B cell (primary cell): ENCODE measurements at regions of chr3 and their contacts with region 1.

Region 1: DNA sequence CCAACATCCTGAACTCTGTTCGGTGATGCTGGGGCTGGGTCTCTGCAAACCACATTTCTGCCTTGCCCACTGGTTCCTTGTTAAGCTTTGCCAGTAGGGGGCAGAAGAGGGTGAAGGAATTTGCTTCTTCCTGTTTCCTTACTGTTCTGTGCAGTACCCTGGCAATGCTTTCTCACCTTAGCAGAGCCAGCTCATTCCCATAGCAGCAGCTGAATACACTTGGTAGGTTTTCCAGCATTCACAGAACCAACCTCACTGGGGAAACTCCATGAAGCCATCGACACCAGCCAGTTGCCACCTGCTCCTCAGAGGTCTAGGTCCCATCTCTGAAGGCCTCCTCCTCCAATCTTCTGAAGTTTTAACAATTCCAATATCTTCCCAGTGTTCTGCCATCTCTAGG is 308.4 kb downstream of the PDCD6IP start:
- DNase-seq: peak; percentile 49
- ATAC-seq: peak; percentile 39
- H3K4me3 ChIP-seq: no peak overlapping the region
- H3K4me3 Mint-ChIP-seq: no peak overlapping the region
- H3K27ac ChIP-seq: no peak overlapping the region
- H3K27ac Mint-ChIP-seq: no peak overlapping the region
- H3K4me1 ChIP-seq: peaks cover 18 to 21% of the 10 kb centered on the region in 2 donors
- H3K4me1 Mint-ChIP-seq: peaks cover 28% of the 10 kb centered on the region
- H3K27me3 ChIP-seq: no peaks in the 10 kb centered on the region
- H3K27me3 Mint-ChIP-seq: no peaks in the 10 kb centered on the region
- CTCF ChIP-seq: peak; percentile 65

Region 2: DNA sequence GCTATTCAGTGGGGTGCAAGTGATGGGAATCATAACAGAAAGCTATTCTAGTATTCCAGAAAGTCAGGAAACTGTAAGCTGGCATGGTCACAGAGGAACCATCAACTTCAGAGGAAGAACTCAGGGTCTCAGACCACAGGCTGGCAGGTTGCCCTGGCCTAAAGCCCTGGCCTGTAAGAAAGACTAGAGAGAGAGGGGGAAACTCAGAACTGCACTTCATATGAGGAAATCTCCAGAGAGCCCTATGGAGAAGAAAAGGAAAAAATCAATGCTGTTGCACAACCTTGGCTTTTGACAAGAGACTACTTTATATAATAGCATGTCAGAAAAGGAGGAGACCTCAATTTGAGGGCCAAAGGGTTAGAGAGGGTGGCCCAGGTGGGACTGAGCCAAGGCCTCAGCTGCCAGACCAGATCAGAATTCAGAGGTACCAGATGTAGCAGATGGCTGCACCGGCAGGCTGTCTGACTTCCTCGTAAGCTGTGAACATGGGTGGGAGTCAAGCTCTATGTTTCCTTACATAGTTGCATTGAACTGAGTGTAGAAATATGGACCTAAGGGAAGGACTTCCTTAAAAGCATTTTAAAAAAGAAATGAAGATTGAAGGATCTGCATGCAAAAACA is 25.3 kb after region 1 on chr3:
- CTCF ChIA-PET with region 1: no interaction called
- POLR2A ChIA-PET with region 1: no interaction called
- intact Hi-C with region 1: no loop called
- DNase-seq: no peak
- ATAC-seq: no peak
- H3K4me3 ChIP-seq: no peak overlapping the region
- H3K4me3 Mint-ChIP-seq: no peak overlapping the region
- H3K27ac ChIP-seq: no peak overlapping the region
- H3K27ac Mint-ChIP-seq: no peak overlapping the region
- H3K4me1 ChIP-seq: no peaks in the 10 kb centered on the region
- H3K4me1 Mint-ChIP-seq: no peaks in the 10 kb centered on the region
- H3K27me3 ChIP-seq: no peaks in the 10 kb centered on the region
- H3K27me3 Mint-ChIP-seq: no peaks in the 10 kb centered on the region
- CTCF ChIP-seq: no peak

Region 3: GRCh38 chr3:34200576-34200975 is 93.7 kb after region 1 on chr3:
- CTCF ChIA-PET with region 1: no interaction called
- POLR2A ChIA-PET with region 1: no interaction called
- intact Hi-C with region 1: loop called (anchors 5 kb)
- DNase-seq: peak; percentile 73
- ATAC-seq: peak; percentile 79
- H3K4me3 ChIP-seq: peak overlapping the region in 4 of 5 experiments; percentile 23 to 44 (median 31)
- H3K4me3 Mint-ChIP-seq: peak overlapping the region; percentile 82
- H3K27ac ChIP-seq: peak overlapping the region; percentile 87 to 97
- H3K27ac Mint-ChIP-seq: peak overlapping the region; percentile 96
- H3K4me1 ChIP-seq: peaks cover 54% of the 10 kb centered on the region in 2 donors
- H3K4me1 Mint-ChIP-seq: peaks cover 78% of the 10 kb centered on the region
- H3K27me3 ChIP-seq: no peaks in the 10 kb centered on the region
- H3K27me3 Mint-ChIP-seq: no peaks in the 10 kb centered on the region
- CTCF ChIP-seq: no peak

Region 4: GRCh38 chr3:34364335-34364734 is 257.5 kb after region 1 on chr3:
- CTCF ChIA-PET with region 1: no interaction called
- POLR2A ChIA-PET with region 1: no interaction called
- intact Hi-C with region 1: no loop called
- DNase-seq: no peak
- ATAC-seq: no peak
- H3K4me3 ChIP-seq: no peak overlapping the region
- H3K4me3 Mint-ChIP-seq: no peak overlapping the region
- H3K27ac ChIP-seq: no peak overlapping the region
- H3K27ac Mint-ChIP-seq: no peak overlapping the region
- H3K4me1 ChIP-seq: peaks cover 5 to 6% of the 10 kb centered on the region in 2 donors
- H3K4me1 Mint-ChIP-seq: peaks cover 10% of the 10 kb centered on the region
- H3K27me3 ChIP-seq: no peaks in the 10 kb centered on the region
- H3K27me3 Mint-ChIP-seq: no peaks in the 10 kb centered on the region
- CTCF ChIP-seq: no peak

Region 5: DNA sequence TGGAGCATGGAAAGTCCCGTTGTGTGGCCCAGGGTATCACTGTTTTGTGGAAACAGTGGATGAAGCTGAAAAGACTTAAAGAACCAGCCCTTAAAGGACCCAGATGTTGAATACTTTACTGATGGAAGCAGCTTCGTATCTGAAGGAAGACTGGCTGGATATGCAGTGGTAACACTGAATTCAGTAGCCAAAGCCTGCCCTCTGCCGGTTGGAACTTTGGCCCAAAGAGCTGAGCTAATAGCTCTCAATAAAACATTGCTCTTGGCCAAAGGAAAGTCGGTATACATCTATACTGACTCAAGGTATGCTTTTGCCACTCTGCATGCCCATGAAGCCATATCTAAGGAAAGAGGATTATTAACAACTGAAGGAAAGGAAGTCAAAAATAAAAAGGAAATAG is 577.0 kb after region 1 on chr3:
- CTCF ChIA-PET with region 1: interaction called, 18 read pairs
- POLR2A ChIA-PET with region 1: no interaction called
- intact Hi-C with region 1: loop called (anchors 2 kb)
- DNase-seq: peak; percentile 41
- ATAC-seq: no peak
- H3K4me3 ChIP-seq: no peak overlapping the region
- H3K4me3 Mint-ChIP-seq: no peak overlapping the region
- H3K27ac ChIP-seq: no peak overlapping the region
- H3K27ac Mint-ChIP-seq: no peak overlapping the region
- H3K4me1 ChIP-seq: no peaks in the 10 kb centered on the region
- H3K4me1 Mint-ChIP-seq: no peaks in the 10 kb centered on the region
- H3K27me3 ChIP-seq: no peaks in the 10 kb centered on the region
- H3K27me3 Mint-ChIP-seq: no peaks in the 10 kb centered on the region
- CTCF ChIP-seq: peak; percentile 36